ENCODE measurements at regions of chr19 and their contacts with region 1.

Region 1: GRCh38 chr19:41795031-41795461 is 1.3 kb upstream of the CEACAM3 start:
- DNase-seq: peak; percentile 68 to 71
- H3K4me3 ChIP-seq: no peak overlapping the region
- H3K4me3 Mint-ChIP-seq: no peak overlapping the region
- H3K27ac Mint-ChIP-seq: no peak overlapping the region
- H3K4me1 ChIP-seq: peaks cover 25% of the 10 kb centered on the region
- H3K4me1 Mint-ChIP-seq: peaks cover 24% of the 10 kb centered on the region
- H3K27me3 ChIP-seq: no peaks in the 10 kb centered on the region
- H3K27me3 Mint-ChIP-seq: no peaks in the 10 kb centered on the region
- CTCF ChIP-seq: peak; percentile 73 to 87

Region 2: GRCh38 chr19:41821003-41821735 is 26.1 kb after region 1 on chr19:
- CTCF ChIA-PET with region 1: interaction called, 17 read pairs
- POLR2A ChIA-PET with region 1: no interaction called
- intact Hi-C with region 1: loop called (anchors 1 kb)
- DNase-seq: peak in 1 of 2 experiments; percentile 75
- H3K4me3 ChIP-seq: no peak overlapping the region
- H3K4me3 Mint-ChIP-seq: no peak overlapping the region
- H3K27ac Mint-ChIP-seq: no peak overlapping the region
- H3K4me1 ChIP-seq: no peaks in the 10 kb centered on the region
- H3K4me1 Mint-ChIP-seq: no peaks in the 10 kb centered on the region
- H3K27me3 ChIP-seq: no peaks in the 10 kb centered on the region
- H3K27me3 Mint-ChIP-seq: peaks cover 21% of the 10 kb centered on the region
- CTCF ChIP-seq: peak; percentile 66 to 81